T-cell (primary cell): ENCODE measurements at regions of chr1 and their contacts with region 1.

Region 1: GRCh38 chr1:70205434-70206118 is at the start of gene LRRC40:
- DNase-seq: peak; percentile 90 to 98 (median 95)
- ATAC-seq: peak; percentile 91 to 96 (median 94)
- H3K4me3 ChIP-seq: peak within 1 kb of the TSS; percentile 81 to 91
- H3K4me3 Mint-ChIP-seq: peak within 1 kb of the TSS; percentile 93 to 98 (median 97)
- H3K27ac ChIP-seq: peak within 1 kb of the TSS; percentile 95
- H3K27ac Mint-ChIP-seq: peak within 1 kb of the TSS; percentile 98 to 99
- H3K4me1 ChIP-seq: peaks cover 15 to 28% of the 10 kb centered on the region in 2 experiments
- H3K4me1 Mint-ChIP-seq: peaks cover 76 to 86% (median 84%) of the 10 kb centered on the region in 3 donors
- H3K27me3 ChIP-seq: no peaks in the 10 kb centered on the region
- H3K27me3 Mint-ChIP-seq: no peaks in the 10 kb centered on the region
- total RNA-seq, gene LRRC40: 9.7 to 11.3 (median 10.8) TPM

Region 2: GRCh38 chr1:70017770-70018169 is 187.8 kb before region 1 on chr1:
- CTCF ChIA-PET with region 1: no interaction called
- POLR2A ChIA-PET with region 1: no interaction called
- DNase-seq: no peak
- ATAC-seq: no peak
- H3K4me3 ChIP-seq: no peak overlapping the region
- H3K4me3 Mint-ChIP-seq: no peak overlapping the region
- H3K27ac ChIP-seq: no peak overlapping the region
- H3K27ac Mint-ChIP-seq: no peak overlapping the region
- H3K4me1 ChIP-seq: no peaks in the 10 kb centered on the region
- H3K4me1 Mint-ChIP-seq: no peaks in the 10 kb centered on the region
- H3K27me3 ChIP-seq: no peaks in the 10 kb centered on the region
- H3K27me3 Mint-ChIP-seq: no peaks in the 10 kb centered on the region

Region 3: DNA sequence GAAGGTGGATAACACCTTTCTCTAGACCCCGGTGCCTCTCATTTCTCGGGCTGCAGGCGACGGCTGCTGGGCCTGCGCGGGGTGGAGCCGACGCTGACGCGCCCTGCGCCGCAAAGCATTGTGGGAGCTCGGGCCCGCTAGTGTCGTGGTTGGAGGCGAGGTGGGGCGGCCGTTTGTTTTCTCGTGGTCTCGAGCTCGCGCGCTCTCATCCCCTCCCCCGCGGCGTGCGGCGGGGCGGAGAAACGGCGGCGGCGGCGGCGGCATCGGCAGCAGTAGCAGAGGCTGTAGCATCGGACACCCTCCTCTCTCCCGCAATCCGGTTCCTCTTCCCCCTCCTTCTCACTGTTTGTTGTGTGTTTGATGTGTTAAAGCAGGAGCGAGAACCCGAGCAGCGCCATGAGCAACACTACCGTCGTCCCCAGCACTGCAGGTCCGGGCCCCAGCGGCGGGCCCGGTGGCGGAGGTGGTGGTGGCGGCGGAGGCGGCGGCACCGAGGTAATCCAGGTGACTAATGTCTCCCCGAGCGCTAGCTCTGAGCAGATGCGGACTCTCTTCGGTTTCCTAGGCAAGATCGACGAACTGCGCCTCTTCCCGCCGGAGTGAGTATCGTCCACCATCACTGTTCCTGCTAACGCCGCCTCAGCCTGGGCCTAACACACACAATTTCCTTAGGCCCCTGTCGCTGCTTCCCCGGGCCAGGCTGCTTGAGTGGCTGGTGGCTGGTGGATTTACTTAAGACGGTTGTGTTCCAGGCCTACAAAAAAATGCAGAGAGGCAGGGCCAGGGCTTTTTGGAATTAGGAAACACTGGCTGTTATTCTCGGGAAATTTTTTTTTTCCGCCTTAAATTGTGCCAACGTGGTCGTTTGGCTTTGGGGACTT is 15.9 kb after region 1 on chr1 and contains the start of gene SRSF11:
- CTCF ChIA-PET with region 1: interaction called, 3 to 13 read pairs
- POLR2A ChIA-PET with region 1: interaction called, 5 to 57 read pairs
- DNase-seq: peak; percentile 92 to 99 (median 96)
- ATAC-seq: peak; percentile 94 to 98 (median 97)
- H3K4me3 ChIP-seq: peak within 1 kb of the TSS; percentile 81 to 88
- H3K4me3 Mint-ChIP-seq: peak within 1 kb of the TSS; percentile 79 to 92 (median 88)
- H3K27ac ChIP-seq: peak within 1 kb of the TSS; percentile 95
- H3K27ac Mint-ChIP-seq: peak within 1 kb of the TSS; percentile 93 to 97
- H3K4me1 ChIP-seq: peaks cover 8 to 23% of the 10 kb centered on the region in 2 experiments
- H3K4me1 Mint-ChIP-seq: peaks cover 51 to 57% (median 53%) of the 10 kb centered on the region in 3 donors
- H3K27me3 ChIP-seq: no peaks in the 10 kb centered on the region
- H3K27me3 Mint-ChIP-seq: no peaks in the 10 kb centered on the region
- total RNA-seq, gene SRSF11: 291 to 374 (median 302) TPM

Region 4: DNA sequence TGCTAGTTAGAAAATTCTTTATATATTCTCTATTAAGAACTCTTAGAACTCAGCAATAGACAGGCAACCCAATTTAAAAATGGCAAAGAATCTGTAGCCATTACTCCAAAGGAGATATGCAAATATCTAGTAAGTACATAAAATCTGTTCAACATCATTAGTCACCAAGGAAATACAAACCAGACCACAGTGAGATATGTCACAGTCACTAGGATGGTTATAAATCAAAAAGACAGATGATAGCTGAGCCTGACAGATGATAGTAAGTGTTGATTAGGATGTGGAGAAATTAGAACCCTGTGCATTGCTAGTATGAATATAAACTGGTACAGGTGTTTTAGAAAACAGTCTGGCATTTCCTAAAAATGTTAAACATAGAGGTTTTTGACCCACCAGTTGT is 42.2 kb after region 1 on chr1:
- CTCF ChIA-PET with region 1: no interaction called
- POLR2A ChIA-PET with region 1: no interaction called
- DNase-seq: no peak
- ATAC-seq: no peak
- H3K4me3 ChIP-seq: no peak overlapping the region
- H3K4me3 Mint-ChIP-seq: no peak overlapping the region
- H3K27ac ChIP-seq: no peak overlapping the region
- H3K27ac Mint-ChIP-seq: no peak overlapping the region
- H3K4me1 ChIP-seq: no peaks in the 10 kb centered on the region
- H3K4me1 Mint-ChIP-seq: peaks cover 4 to 24% (median 8%) of the 10 kb centered on the region in 3 donors
- H3K27me3 ChIP-seq: no peaks in the 10 kb centered on the region
- H3K27me3 Mint-ChIP-seq: no peaks in the 10 kb centered on the region

Region 5: GRCh38 chr1:71080739-71081696 is 875.4 kb after region 1 on chr1 and contains the start of gene ZRANB2:
- CTCF ChIA-PET with region 1: interaction called in 1 of 2 experiments, 13 read pairs
- POLR2A ChIA-PET with region 1: interaction called in 1 of 2 experiments, 13 read pairs
- DNase-seq: peak; percentile 80 to 95 (median 90)
- ATAC-seq: peak; percentile 96 to 98 (median 98)
- H3K4me3 ChIP-seq: peak within 1 kb of the TSS; percentile 83 to 98
- H3K4me3 Mint-ChIP-seq: peak within 1 kb of the TSS; percentile 89 to 98 (median 95)
- H3K27ac ChIP-seq: peak within 1 kb of the TSS; percentile 92
- H3K27ac Mint-ChIP-seq: peak within 1 kb of the TSS; percentile 99 to 100
- H3K4me1 ChIP-seq: peaks cover 7 to 13% of the 10 kb centered on the region in 2 experiments
- H3K4me1 Mint-ChIP-seq: peaks cover 24 to 40% (median 34%) of the 10 kb centered on the region in 3 donors
- H3K27me3 ChIP-seq: peaks cover 0 to 11% of the 10 kb centered on the region in 2 experiments
- H3K27me3 Mint-ChIP-seq: peaks cover 16 to 22% of the 10 kb centered on the region in 2 donors
- total RNA-seq, gene ZRANB2: 93.0 to 133 (median 127) TPM